ENCODE measurements at regions of chr5 and their contacts with region 1.

Region 1: GRCh38 chr5:91419571-91420537 is 36.7 kb upstream of the ARRDC3 start:
- DNase-seq: no peak
- H3K4me3 ChIP-seq: no peak overlapping the region
- CTCF ChIP-seq: peak; percentile 13

Region 2: DNA sequence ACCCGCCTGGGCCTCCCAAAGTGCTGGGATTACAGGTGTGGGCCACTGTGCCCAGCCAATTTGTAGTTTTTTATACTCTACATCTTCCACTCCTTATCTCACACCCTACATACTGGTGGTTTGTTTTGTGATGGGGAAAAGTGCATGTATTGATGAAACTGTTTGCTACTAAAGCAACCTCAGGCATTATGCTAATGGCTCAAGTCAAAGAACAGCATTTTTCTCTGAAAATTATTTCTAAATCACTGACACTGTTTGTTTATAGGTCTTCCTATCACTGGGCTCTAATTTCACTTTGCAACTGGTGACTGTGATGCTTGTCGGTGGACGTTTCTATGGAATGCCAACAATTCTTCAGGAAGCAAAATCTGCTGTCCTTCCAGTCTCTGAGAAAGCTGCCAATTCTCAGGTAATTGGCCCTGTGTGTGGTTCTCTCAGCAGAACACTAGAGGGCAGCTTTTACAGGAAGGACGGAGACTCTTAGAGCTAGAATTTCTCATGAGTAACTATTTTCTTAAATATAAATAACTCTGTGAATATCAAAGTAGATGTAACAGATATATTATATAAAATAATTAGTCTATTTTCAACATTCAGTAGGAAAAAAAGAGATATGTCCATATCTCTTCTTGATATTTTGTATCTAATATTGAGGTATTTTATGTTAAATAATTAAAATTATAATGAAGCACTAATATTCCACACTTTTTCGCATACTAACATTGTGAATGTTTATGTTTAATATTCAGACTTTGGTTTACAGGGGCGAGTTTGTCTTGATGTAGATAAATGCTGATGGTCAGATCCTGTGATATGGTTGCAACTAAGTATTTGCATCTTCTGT is 617.2 kb before region 1 on chr5:
- CTCF ChIA-PET with region 1: interaction called, 11 read pairs
- POLR2A ChIA-PET with region 1: no interaction called
- DNase-seq: no peak
- H3K4me3 ChIP-seq: no peak overlapping the region
- CTCF ChIP-seq: peak; percentile 59

Region 3: DNA sequence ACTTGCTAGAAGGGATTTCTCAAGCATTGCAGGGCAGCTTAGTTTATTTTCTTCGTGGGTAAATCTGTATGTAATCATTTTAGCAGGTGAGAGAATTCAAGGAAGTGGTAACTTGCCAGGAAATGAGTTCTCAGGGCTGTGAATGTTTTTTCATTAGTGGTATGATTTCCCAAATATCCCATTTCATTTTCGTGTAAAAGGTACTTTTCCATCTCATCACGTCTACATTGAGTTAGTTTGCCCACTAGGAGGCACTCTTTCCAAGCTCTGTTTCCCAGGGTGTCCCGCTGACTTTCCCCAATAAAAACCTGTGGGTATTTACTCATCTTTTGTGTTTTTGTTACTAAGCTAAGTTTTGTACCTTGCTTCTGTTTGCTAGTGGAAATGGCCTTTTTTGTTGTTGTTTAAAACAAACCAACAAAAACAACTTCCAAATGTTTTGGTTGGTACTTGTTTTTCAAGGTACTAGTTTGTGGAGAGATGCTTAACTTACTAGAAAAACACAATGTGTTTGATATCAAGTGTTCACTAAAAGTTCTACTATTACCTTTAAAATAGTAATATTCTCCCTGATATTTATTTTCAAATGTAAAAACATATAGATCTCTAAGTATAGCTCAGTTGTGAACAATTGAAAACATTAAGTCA is 487.7 kb before region 1 on chr5:
- CTCF ChIA-PET with region 1: interaction called, 146 read pairs
- POLR2A ChIA-PET with region 1: no interaction called
- DNase-seq: no peak
- H3K4me3 ChIP-seq: no peak overlapping the region
- CTCF ChIP-seq: peak; percentile 46

Region 4: GRCh38 chr5:91072871-91073270 is 347.0 kb before region 1 on chr5:
- CTCF ChIA-PET with region 1: interaction called, 15 read pairs
- POLR2A ChIA-PET with region 1: no interaction called
- DNase-seq: peak; percentile 23
- H3K4me3 ChIP-seq: no peak overlapping the region
- CTCF ChIP-seq: no peak

Region 5: GRCh38 chr5:91403438-91403837 is 16.4 kb before region 1 on chr5:
- CTCF ChIA-PET with region 1: interaction called, 111 read pairs
- POLR2A ChIA-PET with region 1: no interaction called
- DNase-seq: no peak
- H3K4me3 ChIP-seq: no peak overlapping the region
- CTCF ChIP-seq: no peak

Region 6: GRCh38 chr5:91591076-91591475 is 171.2 kb after region 1 on chr5:
- CTCF ChIA-PET with region 1: no interaction called
- POLR2A ChIA-PET with region 1: no interaction called
- DNase-seq: no peak
- H3K4me3 ChIP-seq: no peak overlapping the region
- CTCF ChIP-seq: no peak

Region 7: DNA sequence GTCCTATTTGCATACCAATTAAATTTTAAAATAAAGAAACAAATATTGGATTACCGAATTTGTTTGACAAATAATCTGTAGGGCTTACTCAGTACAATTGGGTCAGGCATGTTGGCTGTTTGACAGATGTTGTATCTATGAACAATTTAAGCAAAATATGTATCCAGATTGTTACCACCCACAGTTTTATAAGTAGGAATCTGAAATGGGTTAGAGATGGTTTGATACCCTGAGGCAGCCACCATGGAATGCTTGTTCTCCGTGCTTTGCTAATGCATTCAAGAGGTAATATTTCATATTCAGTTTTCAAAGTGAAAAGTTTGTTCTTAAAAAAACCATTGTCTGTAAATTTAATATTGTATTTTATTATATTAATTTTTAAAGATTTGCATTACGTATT is 248.4 kb after region 1 on chr5:
- CTCF ChIA-PET with region 1: no interaction called
- POLR2A ChIA-PET with region 1: no interaction called
- DNase-seq: no peak
- H3K4me3 ChIP-seq: no peak overlapping the region
- CTCF ChIP-seq: no peak

Measured in AG04449 (cell line).